Vagina (tissue), 2 donors: ENCODE measurements at regions of chr5 and their contacts with region 1.

Region 1: DNA sequence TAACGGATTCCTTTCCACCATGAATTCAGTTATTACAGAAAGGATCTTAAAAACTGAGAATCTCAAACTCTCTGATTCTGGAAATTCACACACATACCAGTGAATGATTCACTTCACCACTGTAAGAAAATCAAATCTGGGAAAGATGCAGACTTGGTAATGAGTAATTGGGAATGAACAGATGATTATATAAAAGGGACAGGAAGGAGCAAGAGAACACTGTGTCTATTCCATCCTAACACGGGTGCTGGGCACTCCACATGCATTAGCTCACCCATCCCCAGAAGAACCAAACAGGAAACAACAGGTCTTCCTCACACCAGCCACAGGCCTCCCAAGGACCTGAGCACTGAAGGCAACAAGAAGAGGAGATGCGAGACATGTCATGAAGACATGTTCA is 74.8 kb upstream of the ZNF622 start:
- DNase-seq: no peak
- H3K4me3 ChIP-seq: no peak overlapping the region
- H3K27ac ChIP-seq: peak overlapping the region; percentile 74
- H3K4me1 ChIP-seq: peaks cover 25% of the 10 kb centered on the region
- H3K27me3 ChIP-seq: no peaks in the 10 kb centered on the region
- CTCF ChIP-seq: no peak
- POLR2A ChIP-seq: no peak

Region 2: DNA sequence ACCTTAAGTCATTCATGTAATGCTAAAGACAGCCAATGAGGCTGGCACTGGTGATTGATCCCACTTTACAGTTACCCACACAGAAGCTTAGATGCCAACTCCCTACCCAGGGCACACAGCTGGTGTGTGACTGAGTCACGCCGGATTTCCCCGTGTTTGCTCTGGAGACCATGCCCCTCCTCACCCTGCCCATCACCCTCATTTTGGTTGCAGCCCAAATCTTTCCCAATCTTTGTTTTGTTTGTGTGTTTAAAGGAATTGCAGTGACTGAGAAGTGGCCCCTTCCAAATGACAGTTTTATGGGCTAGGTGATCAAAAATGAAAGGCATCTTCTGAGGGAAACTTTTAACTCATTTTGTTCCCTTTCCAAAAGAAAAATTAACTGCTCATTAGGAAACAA is 1029.6 kb before region 1 on chr5:
- intact Hi-C with region 1: no loop called
- DNase-seq: no peak
- H3K4me3 ChIP-seq: no peak overlapping the region
- H3K27ac ChIP-seq: no peak overlapping the region
- H3K4me1 ChIP-seq: peaks cover 50% of the 10 kb centered on the region
- H3K27me3 ChIP-seq: no peaks in the 10 kb centered on the region
- CTCF ChIP-seq: no peak
- POLR2A ChIP-seq: no peak

Region 3: DNA sequence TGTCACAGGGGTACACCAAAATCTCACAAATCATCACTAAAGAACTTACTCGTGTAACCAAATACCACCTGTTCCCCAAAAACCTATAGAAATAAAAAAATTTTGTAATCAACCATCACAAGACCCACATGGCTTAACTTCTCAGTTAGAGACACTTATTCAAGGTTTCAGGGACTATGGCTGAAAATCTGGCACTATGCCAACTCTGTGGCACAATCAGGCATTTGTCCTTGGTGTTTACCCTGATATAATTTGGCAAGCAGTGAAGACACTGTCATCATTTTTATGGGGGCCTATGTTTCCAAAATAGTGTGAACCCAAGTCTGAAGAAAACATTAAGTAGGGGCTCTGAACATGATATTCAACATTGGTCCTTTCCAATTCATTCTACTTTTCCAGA is 133.8 kb before region 1 on chr5:
- intact Hi-C with region 1: no loop called
- DNase-seq: no peak
- H3K4me3 ChIP-seq: no peak overlapping the region
- H3K27ac ChIP-seq: no peak overlapping the region
- H3K4me1 ChIP-seq: no peaks in the 10 kb centered on the region
- H3K27me3 ChIP-seq: no peaks in the 10 kb centered on the region
- CTCF ChIP-seq: no peak
- POLR2A ChIP-seq: no peak

Region 4: DNA sequence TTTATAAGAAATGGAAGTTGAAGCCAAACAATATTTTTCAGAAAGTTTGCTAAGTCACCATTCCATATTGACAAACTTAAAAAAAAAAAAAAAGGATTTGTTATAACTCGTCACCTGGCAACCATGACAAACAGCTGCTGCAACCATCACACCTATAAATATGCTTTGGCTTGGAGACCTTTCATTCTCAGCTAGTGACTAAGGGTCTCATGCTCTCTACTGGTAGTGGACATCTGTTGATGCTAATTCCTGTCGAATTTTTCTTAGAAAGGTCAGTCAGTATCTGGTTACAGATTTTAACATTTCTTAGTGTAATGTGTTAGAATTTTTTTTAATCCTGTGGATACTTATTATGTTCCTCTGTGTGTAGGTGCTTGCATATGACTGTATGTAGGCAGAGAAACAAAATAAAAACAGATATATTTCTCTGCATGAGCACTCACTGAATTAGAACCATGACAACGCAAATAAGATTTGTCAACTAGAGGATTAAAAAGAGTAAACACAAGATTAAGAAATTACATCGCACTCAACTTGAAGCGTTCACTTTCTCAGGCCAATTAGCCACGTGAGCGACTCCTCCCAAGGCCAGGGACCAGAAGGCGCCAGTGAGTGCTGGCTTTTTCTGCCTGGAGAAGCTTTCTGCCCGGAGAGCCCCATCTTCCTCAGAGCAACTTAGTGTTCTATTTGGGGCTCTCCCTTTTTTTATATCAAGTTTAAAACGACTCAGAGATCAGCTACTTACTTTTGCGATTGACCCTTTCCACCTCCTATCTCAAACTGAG is 47.8 kb before region 1 on chr5:
- intact Hi-C with region 1: loop called (anchors 10 kb)
- DNase-seq: no peak
- H3K4me3 ChIP-seq: no peak overlapping the region
- H3K27ac ChIP-seq: peak overlapping the region; percentile 63
- H3K4me1 ChIP-seq: peaks cover 21% of the 10 kb centered on the region
- H3K27me3 ChIP-seq: no peaks in the 10 kb centered on the region
- CTCF ChIP-seq: no peak
- POLR2A ChIP-seq: no peak